ENCODE measurements at regions of chr4 and their contacts with region 1.

Region 1: DNA sequence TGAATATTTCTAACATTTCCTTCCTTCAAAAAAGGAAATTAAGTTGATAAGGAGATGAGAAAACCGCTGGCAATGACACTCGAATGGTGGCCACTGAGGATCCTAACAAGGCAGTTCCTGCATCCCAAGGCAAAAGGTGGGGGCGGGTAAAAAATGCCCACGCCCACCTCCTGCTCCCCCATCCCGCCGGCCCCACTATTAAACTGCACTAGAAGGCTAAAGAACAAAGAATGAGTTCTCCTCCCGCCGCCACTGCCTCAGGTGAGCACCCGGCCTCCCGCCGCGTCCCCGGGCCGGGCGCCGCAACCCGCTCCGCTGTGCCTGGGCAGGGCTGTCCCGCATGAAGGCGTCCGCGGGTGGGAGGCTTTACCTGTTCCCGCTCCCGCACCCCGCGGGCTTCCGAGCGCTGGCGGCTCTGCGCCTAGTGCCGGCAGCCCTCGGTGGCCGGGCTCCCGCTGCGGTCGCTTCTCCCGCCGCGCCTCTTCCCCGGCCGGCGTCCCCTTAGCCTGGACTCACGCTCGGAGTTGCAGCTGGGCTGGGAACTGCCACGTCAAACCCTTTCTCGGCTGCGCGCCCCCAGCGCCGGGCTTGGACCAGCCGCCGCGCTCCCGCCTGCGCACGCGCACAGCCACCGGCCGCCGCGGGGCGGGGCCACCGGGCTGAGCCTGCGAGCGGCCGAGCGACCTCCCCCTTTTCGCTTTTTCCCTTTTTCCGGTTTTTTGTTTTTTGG is at the start of gene SEC24D:
- DNase-seq: peak; percentile 97
- H3K4me3 Mint-ChIP-seq: peak within 1 kb of the TSS; percentile 94
- H3K27ac Mint-ChIP-seq: peak within 1 kb of the TSS; percentile 95
- H3K4me1 Mint-ChIP-seq: peaks cover 31% of the 10 kb centered on the region
- H3K27me3 Mint-ChIP-seq: peaks cover 6% of the 10 kb centered on the region
- total RNA-seq, gene SEC24D: 43.9 and 45.3 TPM in 2 replicates

Region 2: DNA sequence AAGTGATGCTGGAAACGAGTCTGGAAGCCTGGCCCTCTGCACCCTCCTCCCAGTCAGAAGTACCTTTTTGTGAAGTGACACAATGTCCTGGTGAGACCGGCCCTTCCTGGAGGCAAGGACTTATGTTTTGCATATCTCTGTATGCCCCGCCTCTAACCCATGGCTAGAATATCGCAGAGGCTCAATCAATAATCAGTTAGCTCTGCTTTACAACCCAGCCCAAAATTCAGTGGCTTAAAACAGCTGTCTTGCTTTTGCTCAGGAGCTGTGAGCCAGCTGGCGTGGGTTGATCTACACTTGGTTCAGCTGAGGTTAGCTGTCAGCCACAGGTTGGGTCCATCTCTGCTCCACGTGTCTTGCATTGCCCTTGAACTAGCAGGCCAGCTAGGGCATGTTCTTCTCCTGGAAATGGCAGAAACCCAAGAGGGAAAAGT is 249.4 kb before region 1 on chr4:
- intact Hi-C with region 1: loop called (anchors 10 kb)
- DNase-seq: no peak
- H3K4me3 Mint-ChIP-seq: no peak overlapping the region
- H3K27ac Mint-ChIP-seq: no peak overlapping the region
- H3K4me1 Mint-ChIP-seq: peaks cover 9% of the 10 kb centered on the region
- H3K27me3 Mint-ChIP-seq: peaks cover 9% of the 10 kb centered on the region

Region 3: DNA sequence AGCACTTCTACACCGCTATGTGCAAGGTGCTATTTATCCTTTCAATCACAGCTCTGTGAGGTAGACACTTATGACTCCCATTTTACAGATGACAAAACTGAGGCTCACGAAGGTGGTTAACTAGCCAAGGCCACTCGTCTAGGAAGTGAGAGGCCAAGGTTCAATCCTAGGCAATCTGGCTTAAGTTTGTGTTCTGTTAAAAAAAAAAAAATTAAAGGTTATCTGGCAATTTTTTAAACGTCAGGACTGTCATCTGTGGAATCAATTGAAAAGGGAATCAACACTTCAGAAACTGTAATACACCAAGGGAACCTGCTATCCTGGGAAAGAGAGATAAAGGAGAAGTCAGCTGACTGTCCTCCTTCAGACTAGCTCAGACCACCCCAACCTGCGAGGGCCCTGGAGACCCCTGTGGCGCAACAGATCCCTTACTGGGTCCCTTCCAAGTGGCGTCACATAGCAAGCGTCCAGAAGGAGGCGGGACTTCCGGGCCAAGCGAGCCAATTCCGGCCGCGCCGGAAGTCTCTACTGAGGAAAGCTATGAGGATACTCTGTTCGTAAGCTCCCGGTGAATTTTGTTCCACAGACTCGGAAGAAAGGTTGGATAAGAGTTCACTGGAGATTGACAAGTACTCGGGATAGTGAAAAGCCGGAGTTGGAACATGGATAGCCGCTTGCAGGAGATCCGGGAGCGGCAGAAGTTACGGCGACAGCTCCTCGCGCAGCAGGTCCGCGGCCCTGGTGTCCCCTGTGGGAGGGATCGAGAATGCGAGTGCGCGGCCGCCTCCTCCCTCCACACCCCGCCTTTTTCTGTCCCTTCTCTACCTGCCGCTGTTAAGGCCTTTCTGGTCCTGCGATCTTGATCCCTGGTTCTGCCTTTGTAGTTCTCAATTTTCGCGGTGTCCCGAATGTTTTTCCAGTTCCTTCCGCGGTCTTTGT is 150.6 kb before region 1 on chr4 and contains the start of gene METTL14:
- intact Hi-C with region 1: loop called (anchors 1 kb)
- DNase-seq: peak; percentile 96
- H3K4me3 Mint-ChIP-seq: peak within 1 kb of the TSS; percentile 98
- H3K27ac Mint-ChIP-seq: peak within 1 kb of the TSS; percentile 95
- H3K4me1 Mint-ChIP-seq: peaks cover 11% of the 10 kb centered on the region
- H3K27me3 Mint-ChIP-seq: peaks cover 2% of the 10 kb centered on the region
- total RNA-seq, gene METTL14: 50.2 and 51.9 TPM in 2 replicates

Region 4: DNA sequence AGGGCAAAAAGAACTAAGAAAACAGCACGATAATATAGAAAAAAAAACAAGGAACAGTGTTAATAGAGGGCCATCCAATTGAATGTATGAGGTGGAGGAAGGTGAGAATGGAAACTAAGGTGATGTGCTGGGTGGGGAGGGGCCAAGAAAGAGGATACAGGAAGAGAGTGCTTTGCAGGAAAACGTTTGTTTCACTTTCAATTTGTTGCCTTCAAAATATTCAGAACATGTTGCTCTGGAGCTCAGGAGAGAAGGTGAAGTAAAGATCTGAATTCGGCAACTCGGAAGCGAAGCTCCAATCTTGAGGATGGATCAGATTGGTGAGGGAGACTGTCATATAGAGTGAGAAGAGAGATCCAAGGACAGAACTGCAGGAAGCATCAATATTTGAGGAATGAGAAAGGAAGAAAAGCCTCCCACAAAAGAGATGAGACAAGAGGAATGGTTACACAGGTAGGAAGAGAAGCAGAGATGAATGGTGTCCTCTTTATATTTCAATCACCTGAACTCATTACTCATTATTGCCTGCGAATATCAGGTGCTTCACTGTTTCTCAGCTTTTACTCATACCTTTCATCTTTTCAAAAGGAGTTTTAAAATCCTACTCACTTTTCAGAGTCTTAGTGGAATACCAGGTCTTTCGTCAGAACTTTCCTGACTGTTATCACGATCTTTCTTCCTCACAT is 14.9 kb after region 1 on chr4:
- intact Hi-C with region 1: loop called (anchors 1 kb)
- DNase-seq: peak; percentile 85
- H3K4me3 Mint-ChIP-seq: peak overlapping the region; percentile 87
- H3K27ac Mint-ChIP-seq: peak overlapping the region; percentile 94
- H3K4me1 Mint-ChIP-seq: peaks cover 21% of the 10 kb centered on the region
- H3K27me3 Mint-ChIP-seq: peaks cover 17% of the 10 kb centered on the region

Region 5: DNA sequence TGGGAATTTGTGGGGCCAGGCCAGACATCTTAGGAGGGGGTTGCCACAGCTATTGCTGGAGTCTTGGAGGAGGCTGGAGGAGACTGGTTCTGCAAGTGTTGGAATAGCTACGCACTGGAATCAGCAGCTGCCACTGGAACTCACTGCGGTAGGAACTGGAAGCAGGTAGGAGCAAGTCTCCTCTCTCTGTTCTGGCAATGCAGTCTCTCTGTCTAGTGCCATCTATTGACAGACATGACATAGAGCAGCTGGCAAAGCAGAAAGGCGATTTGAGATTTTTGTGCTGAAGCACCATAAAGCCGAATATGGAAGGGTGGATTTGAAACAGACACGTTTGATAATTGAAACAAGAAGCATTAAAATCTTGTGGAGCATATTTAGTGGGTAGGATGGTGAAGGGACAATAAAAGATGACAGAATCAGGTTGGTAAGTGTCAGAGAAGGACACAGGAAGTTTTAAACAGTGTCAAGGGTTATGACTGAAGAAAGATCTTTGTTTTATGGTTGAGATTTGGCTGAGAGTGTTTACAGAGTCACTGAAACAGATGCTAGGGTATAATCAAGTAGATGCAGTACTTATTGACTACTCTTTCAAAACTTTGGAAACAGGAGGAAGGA is 29.5 kb after region 1 on chr4:
- intact Hi-C with region 1: no loop called
- DNase-seq: peak; percentile 73
- H3K4me3 Mint-ChIP-seq: no peak overlapping the region
- H3K27ac Mint-ChIP-seq: no peak overlapping the region
- H3K4me1 Mint-ChIP-seq: no peaks in the 10 kb centered on the region
- H3K27me3 Mint-ChIP-seq: peaks cover 9% of the 10 kb centered on the region